ENCODE measurements at regions of chr6 and their contacts with region 1.

Region 1: GRCh38 chr6:110352563-110353262 is 5.4 kb downstream of the METTL24 start:
- DNase-seq: no peak
- H3K4me3 ChIP-seq: peak overlapping the region in 1 of 2 donors; percentile 0
- H3K27ac ChIP-seq: peak overlapping the region; percentile 60 to 76
- H3K4me1 ChIP-seq: peaks cover 6 to 22% of the 10 kb centered on the region in 2 donors
- H3K27me3 ChIP-seq: no peaks in the 10 kb centered on the region
- CTCF ChIP-seq: no peak

Region 2: GRCh38 chr6:110063594-110064263 is 289.0 kb before region 1 on chr6:
- intact Hi-C with region 1: no loop called
- DNase-seq: no peak
- H3K4me3 ChIP-seq: no peak overlapping the region
- H3K27ac ChIP-seq: no peak overlapping the region
- H3K4me1 ChIP-seq: no peaks in the 10 kb centered on the region
- H3K27me3 ChIP-seq: no peaks in the 10 kb centered on the region
- CTCF ChIP-seq: no peak

Region 3: DNA sequence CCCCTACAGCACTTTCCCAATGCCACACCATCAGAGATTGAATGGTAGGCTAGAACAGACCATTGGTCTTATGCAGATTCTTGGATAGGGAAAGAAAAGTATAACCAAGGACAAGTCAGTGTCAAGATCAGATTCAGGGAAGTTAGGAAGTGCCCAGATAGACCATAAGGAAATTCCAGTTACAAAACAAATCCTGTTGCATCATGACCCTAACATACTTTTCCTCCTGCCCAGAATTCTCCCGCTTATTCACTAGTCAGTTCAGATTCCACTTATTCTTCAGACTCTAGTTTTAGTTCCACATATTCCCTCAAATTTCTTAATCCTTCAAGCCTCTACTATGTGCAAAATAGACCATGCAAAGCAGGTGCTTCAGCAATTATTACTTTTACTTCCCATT is 15.2 kb before region 1 on chr6:
- intact Hi-C with region 1: loop called (anchors 2 kb)
- DNase-seq: no peak
- H3K4me3 ChIP-seq: no peak overlapping the region
- H3K27ac ChIP-seq: no peak overlapping the region
- H3K4me1 ChIP-seq: peaks cover 0 to 11% of the 10 kb centered on the region in 2 donors
- H3K27me3 ChIP-seq: no peaks in the 10 kb centered on the region
- CTCF ChIP-seq: no peak

Measured in ascending aorta (tissue), 2 donors.